ENCODE measurements at regions of chrX and their contacts with region 1.

Region 1: DNA sequence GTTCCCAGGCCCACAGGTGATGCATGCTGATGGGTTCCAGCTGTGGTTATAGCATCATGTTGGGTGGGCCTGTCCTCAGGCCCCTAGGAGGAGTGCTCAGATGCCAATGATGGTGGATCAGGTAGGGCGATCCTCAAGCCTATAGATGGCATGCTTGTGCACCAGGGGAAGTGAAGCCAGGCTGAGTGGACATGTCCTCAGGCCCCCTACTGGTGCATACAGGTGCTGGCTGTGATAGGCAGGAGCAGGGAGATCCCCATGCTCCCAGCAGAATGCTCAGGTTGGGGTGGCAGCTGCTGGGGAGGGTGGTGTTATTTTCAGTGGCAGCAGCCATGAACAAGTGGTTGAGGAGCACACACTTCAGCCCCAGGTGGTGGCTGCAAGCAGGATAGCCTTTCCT is 96.0 kb downstream of the SMARCA1 start:
- DNase-seq: no peak

Region 2: DNA sequence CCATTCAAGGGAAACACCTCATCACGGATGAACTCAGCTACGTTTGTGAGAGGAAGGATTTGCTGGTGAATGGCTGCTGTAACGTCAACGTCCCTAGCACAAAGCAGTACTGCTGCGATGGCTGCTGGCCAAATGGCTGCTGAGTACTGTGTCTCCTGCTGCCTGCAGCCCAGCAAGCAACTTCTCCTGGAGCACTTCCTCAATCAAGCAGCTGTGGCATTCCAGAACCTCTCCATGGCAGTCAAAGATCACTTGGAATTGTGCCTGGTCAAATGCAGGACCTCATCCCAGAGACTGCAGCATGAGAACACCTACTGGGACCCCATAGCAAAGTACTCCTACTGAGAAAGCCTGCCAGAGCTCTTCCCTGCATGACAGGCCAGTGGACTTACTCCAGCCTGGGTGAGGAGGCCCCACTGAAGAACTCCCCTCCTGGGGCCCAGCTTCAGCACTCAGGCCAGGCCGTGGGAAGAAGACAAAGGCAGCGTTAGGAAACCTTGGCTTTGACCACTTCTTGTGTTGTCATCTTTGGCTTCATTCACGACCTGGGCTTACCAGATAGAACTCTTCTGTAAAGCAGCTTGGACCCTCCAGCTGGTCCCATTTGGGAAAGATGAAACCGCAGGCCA is 1218.8 kb after region 1 on chrX:
- intact Hi-C with region 1: loop called in 1 of 2 experiments (anchors 5 kb)
- DNase-seq: no peak

Measured in posterior vena cava (tissue), 2 donors.